GM23248 (cell line): ENCODE measurements at regions of chr2 and their contacts with region 1.

Region 1: GRCh38 chr2:75199428-75200011 is at the start of gene TACR1:
- DNase-seq: peak; percentile 85
- H3K4me3 ChIP-seq: peak within 1 kb of the TSS; percentile 73
- H3K27ac ChIP-seq: no peak within 1 kb of the TSS
- H3K4me1 ChIP-seq: 0 out of 2 replicates have a peak, but pooled peaks cover 3% of the 10 kb centered on the region
- H3K27me3 ChIP-seq: peaks cover 40% of the 10 kb centered on the region
- total RNA-seq, gene TACR1: 0.11 and 0.13 TPM in 2 replicates

Region 2: GRCh38 chr2:75608684-75609333 is 409.3 kb after region 1 on chr2:
- in situ Hi-C with region 1: loop called (anchors 25 kb)
- DNase-seq: peak; percentile 75
- H3K4me3 ChIP-seq: peak overlapping the region; percentile 65
- H3K27ac ChIP-seq: no peak overlapping the region
- H3K4me1 ChIP-seq: peaks cover 49% of the 10 kb centered on the region
- H3K27me3 ChIP-seq: no peaks in the 10 kb centered on the region